ENCODE measurements at regions of chr7 and their contacts with region 1.

Region 1: DNA sequence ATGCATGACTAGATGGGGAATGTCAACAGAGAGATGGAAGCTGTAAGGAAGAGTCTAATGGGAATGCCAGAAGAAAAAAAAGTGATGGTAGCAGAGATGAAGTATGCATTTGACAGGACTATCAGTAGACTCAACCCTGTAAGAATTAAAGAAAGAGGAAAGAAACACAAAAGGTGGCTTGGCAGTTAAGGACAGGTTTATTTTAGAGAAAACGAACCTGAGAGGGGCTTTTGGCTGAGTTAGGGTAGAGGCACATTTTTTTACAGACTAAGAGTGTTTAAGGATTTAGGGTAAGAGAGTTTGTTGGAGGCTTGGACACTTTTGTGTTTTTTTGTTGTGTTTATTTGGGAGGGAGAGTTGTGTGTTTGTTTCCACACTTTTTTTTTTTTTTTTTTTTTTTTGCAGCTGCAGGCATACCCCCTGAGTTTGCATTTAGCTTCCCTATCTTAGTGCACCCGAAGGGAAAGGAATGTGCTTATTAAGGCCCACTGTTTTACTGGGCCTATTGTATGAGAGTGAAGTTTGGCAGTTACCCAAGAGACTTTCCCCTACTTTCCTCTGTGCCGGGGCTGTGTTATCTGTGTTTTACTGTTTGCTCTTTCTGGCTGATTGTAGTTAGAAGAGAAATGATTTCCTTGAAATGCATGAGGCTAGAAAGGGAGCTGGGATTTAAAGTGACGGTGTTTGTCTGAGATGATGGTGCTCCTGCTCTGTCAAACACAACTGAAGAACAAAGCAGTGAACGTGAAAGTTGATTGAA is 32.0 kb downstream of the NPVF start:
- DNase-seq: peak; percentile 66
- H3K4me3 Mint-ChIP-seq: peak overlapping the region; percentile 0
- H3K27ac Mint-ChIP-seq: peak overlapping the region; percentile 28
- H3K4me1 Mint-ChIP-seq: peaks cover 17% of the 10 kb centered on the region
- H3K27me3 Mint-ChIP-seq: no peaks in the 10 kb centered on the region
- CTCF ChIP-seq: no peak

Region 2: DNA sequence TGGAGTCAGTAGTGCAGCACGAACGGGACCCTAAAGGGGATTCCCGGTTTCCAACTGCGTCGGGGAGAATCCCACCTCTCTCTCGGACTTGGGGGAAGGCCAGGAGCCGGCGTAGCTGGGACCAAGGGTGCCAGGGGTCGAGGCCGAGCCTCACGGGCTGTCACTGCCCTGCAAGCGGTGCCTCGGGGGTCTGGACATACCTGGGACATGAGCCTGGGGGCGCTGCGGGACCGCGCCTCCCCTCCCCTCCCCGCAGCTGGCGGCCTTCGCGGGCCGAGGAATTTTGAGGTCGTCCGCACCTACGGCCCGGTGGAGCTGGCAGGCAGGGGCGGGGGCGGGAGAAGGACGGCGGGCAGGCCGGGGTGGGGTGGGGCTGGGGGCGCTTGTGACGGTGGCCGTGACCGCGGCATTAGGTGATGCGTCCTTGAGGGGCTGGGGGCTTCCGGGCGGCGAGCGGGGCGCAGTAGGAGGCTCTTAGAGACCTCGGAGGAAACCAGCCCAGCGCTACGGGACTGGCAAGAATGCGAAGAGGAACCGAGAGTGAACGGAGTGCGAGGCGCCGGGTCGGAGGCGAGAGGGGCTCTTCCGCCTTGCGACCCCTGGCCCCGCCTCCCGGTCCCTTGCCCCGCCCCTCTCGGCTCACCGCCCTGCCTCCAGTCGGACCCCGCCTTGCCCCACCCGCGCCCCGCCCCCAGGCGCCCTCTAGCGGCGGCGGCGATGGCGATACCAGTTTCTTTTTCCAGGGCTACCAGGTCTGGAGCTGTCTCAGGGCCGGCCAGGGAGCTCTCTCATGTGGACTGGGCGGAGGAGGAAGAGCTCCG is 16.3 kb before region 1 on chr7:
- CTCF ChIA-PET with region 1: interaction called, 12 read pairs
- intact Hi-C with region 1: no loop called
- DNase-seq: peak; percentile 99
- H3K4me3 Mint-ChIP-seq: peak overlapping the region; percentile 83
- H3K27ac Mint-ChIP-seq: peak overlapping the region; percentile 57
- H3K4me1 Mint-ChIP-seq: no peaks in the 10 kb centered on the region
- H3K27me3 Mint-ChIP-seq: peaks cover 7% of the 10 kb centered on the region
- CTCF ChIP-seq: peak; percentile 99

Region 3: DNA sequence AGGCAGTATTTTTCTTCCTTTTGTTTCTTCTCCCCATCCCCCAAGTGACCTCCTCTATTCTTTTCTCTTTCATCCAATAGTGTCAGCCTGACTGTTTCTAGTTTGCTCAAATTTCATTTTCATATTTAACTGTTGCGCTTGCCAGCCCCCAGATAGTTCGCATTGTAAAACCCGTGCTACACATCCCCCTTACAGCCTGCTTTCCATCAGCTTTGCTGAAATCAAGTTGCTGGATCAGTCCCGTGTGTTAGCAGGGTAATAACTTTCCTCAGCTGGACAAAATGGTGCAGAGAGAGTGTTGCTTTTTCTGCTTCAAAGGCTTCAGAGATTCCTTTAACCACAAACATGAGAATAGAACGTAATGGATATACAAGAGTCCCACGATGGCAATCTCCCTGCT is 212.6 kb after region 1 on chr7:
- CTCF ChIA-PET with region 1: no interaction called
- intact Hi-C with region 1: no loop called
- DNase-seq: no peak
- H3K4me3 Mint-ChIP-seq: no peak overlapping the region
- H3K27ac Mint-ChIP-seq: no peak overlapping the region
- H3K4me1 Mint-ChIP-seq: no peaks in the 10 kb centered on the region
- H3K27me3 Mint-ChIP-seq: peaks cover 99% of the 10 kb centered on the region
- CTCF ChIP-seq: no peak

Measured in Calu3 (cell line).